KBM-7 (cell line): ENCODE measurements at regions of chr6 and their contacts with region 1.

Region 1: DNA sequence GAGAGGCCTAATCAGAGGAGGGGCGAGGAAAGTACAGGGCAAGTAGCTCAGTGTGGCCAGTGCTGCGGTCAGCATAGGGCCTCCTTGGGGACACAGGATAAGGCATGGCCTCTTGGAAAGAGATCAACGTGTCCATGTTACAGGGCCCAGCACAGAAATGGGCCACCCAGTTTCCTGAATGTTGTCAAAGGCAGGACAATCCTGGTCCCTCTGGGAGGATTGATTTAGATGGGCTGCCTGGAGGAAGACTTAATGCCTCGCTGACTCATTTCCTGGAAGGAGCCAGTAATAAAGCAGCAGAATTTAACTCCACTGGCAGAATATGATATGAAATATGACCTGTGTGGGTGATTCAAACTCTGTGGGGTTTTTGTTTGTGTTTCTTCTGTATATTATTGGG is 16.6 kb downstream of the DDO start:
- DNase-seq: no peak

Region 2: GRCh38 chr6:110053395-110054240 is 345.2 kb before region 1 on chr6:
- in situ Hi-C with region 1: loop called (anchors 25 kb)
- DNase-seq: peak; percentile 52